ENCODE measurements at regions of chr1 and their contacts with region 1.

Region 1: DNA sequence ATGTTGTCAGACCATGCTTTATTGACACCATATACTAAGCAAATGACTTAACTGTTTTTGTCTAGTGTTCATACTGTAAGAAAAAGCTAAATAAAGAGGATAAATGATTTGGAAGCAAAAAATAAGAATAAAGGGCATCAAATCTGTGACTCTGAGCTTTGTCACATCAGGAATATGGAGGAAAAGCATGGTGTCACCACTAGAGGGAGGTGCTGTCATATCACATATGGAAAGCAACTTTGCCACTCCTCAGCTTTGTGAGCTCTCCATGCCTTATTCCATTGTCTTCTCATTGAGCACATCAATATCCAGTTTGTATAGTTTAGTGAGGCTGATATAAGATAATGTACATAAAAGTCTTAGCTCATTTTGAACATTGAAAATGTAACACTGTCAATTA is 20.8 kb upstream of the GBP1 start:
- DNase-seq: peak in 2 of 3 donors; percentile 50 to 80
- H3K4me3 ChIP-seq: no peak overlapping the region
- H3K27ac ChIP-seq: no peak overlapping the region
- H3K4me1 ChIP-seq: no peaks in the 10 kb centered on the region
- H3K27me3 ChIP-seq: no peaks in the 10 kb centered on the region

Region 2: DNA sequence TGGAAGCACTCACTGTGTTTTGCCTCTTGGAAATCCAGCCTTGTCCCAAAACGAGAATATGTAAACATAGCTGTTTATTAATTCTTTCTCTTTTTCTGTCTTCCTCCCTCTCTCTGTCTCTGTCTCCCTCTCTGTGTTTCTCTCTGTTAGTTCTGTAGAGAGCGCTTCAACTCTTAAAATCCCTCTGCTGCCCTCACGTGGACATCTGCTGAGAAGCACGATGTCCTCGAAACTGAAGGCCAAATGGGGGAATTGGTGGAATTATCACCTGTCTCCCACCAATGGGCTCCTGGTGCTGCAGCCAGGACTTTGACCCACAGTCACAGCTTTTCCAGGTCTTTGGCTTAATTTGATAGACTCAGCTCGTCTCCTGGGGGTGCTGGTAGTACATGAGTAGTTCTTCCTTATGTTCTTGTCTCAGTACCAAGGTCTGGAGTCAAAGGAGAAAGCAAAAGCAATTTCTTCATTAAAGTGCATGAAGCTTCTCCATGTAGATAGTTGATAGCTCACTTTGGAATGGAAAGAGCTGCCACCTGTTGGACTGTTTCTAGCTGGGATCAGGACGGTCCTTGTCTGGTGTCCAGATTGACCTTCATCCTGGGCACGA is 272.6 kb after region 1 on chr1:
- CTCF ChIA-PET with region 1: interaction called, 23 read pairs
- POLR2A ChIA-PET with region 1: no interaction called
- DNase-seq: peak; percentile 80 to 88 (median 83)
- H3K4me3 ChIP-seq: no peak overlapping the region
- H3K27ac ChIP-seq: no peak overlapping the region
- H3K4me1 ChIP-seq: peaks cover 0 to 23% (median 5%) of the 10 kb centered on the region in 4 experiments
- H3K27me3 ChIP-seq: no peaks in the 10 kb centered on the region